ENCODE measurements at regions of chr10 and their contacts with region 1.

Region 1: DNA sequence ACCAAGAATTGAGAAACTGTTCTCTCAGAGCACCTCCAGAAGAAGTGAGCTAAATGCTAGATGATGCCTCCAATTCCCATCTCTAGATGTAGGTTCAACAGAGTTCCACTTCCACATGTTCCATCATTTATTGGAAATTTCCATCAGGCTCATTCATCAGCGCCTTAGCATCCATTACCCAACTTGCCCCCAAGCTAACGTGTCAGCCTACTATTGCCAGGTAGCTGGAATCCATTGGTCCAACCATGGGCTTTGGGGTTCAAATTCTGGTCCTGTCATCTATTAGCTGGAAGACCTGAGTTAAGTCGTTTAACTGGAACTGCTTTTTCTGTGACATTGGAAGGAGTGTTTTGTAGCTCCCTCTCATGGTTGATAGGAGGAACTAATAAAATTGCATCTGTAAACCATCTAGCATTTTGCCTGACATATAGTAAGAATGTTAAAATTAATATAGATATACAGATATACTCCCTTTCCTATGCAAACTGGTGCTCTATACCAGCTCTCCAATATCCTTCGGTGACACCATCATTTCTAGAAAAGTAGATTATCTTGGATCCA is 23.9 kb upstream of the SLF2 start:
- DNase-seq: no peak
- ATAC-seq: no peak
- H3K4me3 Mint-ChIP-seq: no peak overlapping the region
- H3K27ac Mint-ChIP-seq: no peak overlapping the region
- H3K4me1 Mint-ChIP-seq: no peaks in the 10 kb centered on the region
- H3K27me3 Mint-ChIP-seq: peaks cover 39% of the 10 kb centered on the region

Region 2: DNA sequence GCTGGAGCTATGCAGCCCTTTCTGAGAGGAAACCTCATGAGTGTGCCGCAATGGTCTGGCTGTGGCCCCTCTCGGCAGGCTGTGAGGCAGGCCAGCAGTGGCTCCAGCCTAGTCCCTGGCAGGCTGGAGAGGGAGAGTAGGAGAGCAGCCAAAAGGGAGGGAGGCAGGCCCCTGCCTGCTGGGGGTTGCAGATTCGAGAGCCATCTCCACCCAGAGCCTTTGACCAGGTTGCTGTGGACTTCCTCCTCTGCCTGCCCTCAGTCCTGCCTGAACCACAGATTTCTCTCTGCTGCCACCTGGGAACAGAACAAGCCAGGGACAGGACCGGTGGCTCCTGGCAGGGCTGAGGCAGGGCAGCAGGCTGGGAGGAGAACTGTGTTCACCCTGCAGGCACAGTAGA is 129.5 kb before region 1 on chr10:
- CTCF ChIA-PET with region 1: no interaction called
- POLR2A ChIA-PET with region 1: no interaction called
- DNase-seq: no peak
- ATAC-seq: no peak
- H3K4me3 Mint-ChIP-seq: no peak overlapping the region
- H3K27ac Mint-ChIP-seq: no peak overlapping the region
- H3K4me1 Mint-ChIP-seq: no peaks in the 10 kb centered on the region
- H3K27me3 Mint-ChIP-seq: peaks cover 63% of the 10 kb centered on the region

Region 3: DNA sequence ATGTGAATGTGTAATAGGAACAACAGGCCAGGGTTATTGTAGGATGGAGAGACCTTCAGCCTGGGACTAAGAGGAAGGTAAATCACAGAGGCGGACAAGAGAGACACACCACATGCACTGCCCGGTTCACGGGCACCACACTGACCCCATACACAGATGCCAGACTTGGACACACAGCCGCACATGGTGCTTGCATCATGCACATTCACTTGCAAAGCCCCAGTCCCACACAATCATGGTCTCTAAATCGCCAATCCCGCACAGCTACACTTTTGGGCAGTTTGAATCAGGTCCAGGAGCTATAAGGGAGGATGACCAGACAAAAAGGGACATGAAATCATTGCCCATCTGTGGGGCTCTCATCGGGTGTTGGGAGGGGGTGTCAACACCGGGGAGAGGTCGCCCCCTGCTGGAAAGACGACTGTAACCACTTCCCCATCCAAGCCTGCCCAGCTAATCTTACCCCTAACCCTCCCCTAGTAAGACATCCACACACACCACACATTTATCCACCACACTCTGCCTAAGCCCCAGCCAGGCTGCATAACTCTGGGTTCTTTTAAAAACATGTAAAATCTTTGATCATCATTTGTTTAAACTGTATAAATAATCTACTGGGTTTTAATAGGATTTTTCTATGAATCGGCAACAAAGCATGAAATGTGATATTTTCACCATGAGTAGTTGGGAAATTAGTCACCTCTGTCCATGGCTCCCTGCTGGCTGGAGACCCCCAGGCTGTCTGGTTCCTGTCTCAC is 16.7 kb before region 1 on chr10:
- CTCF ChIA-PET with region 1: interaction called, 10 read pairs
- POLR2A ChIA-PET with region 1: no interaction called
- DNase-seq: peak; percentile 71
- ATAC-seq: peak; percentile 79
- H3K4me3 Mint-ChIP-seq: no peak overlapping the region
- H3K27ac Mint-ChIP-seq: no peak overlapping the region
- H3K4me1 Mint-ChIP-seq: no peaks in the 10 kb centered on the region
- H3K27me3 Mint-ChIP-seq: peaks cover 11% of the 10 kb centered on the region

Region 4: DNA sequence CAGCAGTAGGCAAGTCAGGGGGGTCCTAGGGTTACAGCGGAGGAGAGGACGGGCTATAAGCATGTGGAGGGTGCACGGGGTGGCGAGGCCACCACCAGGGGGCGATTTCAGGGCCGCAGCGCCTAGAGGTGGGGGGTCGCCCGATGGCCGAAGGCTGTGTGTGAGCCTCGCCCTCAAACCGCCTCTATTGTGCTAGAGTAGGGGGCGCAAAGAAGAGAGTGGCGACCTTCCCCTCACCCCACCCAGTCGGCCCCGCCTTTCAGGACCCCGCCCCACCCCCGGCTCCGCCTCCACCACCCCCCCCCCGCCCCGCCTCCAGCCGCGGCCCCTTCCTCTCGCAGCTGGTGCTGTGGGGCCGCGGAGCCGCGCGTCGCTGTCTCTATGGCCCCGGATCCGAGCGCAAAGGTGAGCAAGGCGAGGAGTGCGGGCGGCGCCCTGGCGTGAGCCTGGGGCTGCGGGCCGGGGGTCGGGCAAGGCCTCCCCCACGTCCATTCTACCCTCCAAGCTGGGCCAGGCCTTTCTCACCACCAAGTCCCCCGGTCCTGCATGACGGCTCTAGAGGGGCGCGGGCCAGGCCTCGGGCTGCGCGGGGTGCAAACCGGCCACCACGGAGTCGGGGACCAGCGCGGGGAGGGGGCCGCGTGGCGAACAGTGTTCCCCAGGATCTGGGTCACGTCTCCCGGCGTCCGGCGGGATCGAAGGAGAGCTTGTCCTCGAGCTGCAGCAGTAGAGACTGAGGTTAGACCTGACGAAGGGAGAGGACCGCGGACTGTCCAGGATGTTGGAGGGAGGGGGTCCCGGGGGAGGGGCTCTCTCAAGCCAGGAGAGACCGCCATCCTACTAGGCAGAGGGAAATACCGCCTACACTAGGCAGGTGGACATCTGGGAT is 80.6 kb after region 1 on chr10 and contains the start of gene SEMA4G:
- CTCF ChIA-PET with region 1: no interaction called
- POLR2A ChIA-PET with region 1: no interaction called
- DNase-seq: peak; percentile 49
- ATAC-seq: peak; percentile 86
- H3K4me3 Mint-ChIP-seq: peak within 1 kb of the TSS; percentile 51
- H3K27ac Mint-ChIP-seq: no peak within 1 kb of the TSS
- H3K4me1 Mint-ChIP-seq: peaks cover 6% of the 10 kb centered on the region
- H3K27me3 Mint-ChIP-seq: peaks cover 3% of the 10 kb centered on the region
- total RNA-seq, gene SEMA4G: 0.16 to 0.40 TPM